Mammary epithelial cell (primary cell): ENCODE measurements at regions of chr17 and their contacts with region 1.

Region 1: GRCh38 chr17:37239690-37240334 is 136.0 kb upstream of the C17orf78 start:
- DNase-seq: no peak
- H3K4me3 ChIP-seq: no peak overlapping the region
- H3K27ac ChIP-seq: no peak overlapping the region
- H3K4me1 ChIP-seq: no peaks in the 10 kb centered on the region
- H3K27me3 ChIP-seq: no peaks in the 10 kb centered on the region
- CTCF ChIP-seq: peak; percentile 61 to 67

Region 2: GRCh38 chr17:37089956-37090355 is 149.9 kb before region 1 on chr17:
- CTCF ChIA-PET with region 1: no interaction called
- dilution Hi-C with region 1: no loop called
- in situ Hi-C with region 1: no loop called
- intact Hi-C with region 1: loop called (anchors 10 kb)
- DNase-seq: no peak
- H3K4me3 ChIP-seq: no peak overlapping the region
- H3K27ac ChIP-seq: no peak overlapping the region
- H3K4me1 ChIP-seq: peaks cover 5% of the 10 kb centered on the region
- H3K27me3 ChIP-seq: no peaks in the 10 kb centered on the region
- CTCF ChIP-seq: no peak

Region 3: GRCh38 chr17:37532756-37533155 is 292.9 kb after region 1 on chr17:
- CTCF ChIA-PET with region 1: no interaction called
- dilution Hi-C with region 1: no loop called
- in situ Hi-C with region 1: no loop called
- intact Hi-C with region 1: no loop called
- DNase-seq: no peak
- H3K4me3 ChIP-seq: no peak overlapping the region
- H3K27ac ChIP-seq: no peak overlapping the region
- H3K4me1 ChIP-seq: no peaks in the 10 kb centered on the region
- H3K27me3 ChIP-seq: no peaks in the 10 kb centered on the region
- CTCF ChIP-seq: no peak